MCF 10A (cell line): ENCODE measurements at regions of chr3 and their contacts with region 1.

Region 1: GRCh38 chr3:112013058-112013783 is 14.5 kb downstream of the TAGLN3 start:
- DNase-seq: peak; percentile 75
- H3K4me3 Mint-ChIP-seq: no peak overlapping the region
- H3K27ac Mint-ChIP-seq: no peak overlapping the region
- H3K4me1 Mint-ChIP-seq: no peaks in the 10 kb centered on the region
- H3K27me3 Mint-ChIP-seq: no peaks in the 10 kb centered on the region
- CTCF ChIP-seq: peak; percentile 42

Region 2: GRCh38 chr3:111668912-111669488 is 344.2 kb before region 1 on chr3:
- CTCF ChIA-PET with region 1: interaction called, 4 read pairs
- POLR2A ChIA-PET with region 1: interaction called, 3 read pairs
- intact Hi-C with region 1: loop called (anchors 1 kb)
- DNase-seq: peak; percentile 61
- H3K4me3 Mint-ChIP-seq: no peak overlapping the region
- H3K27ac Mint-ChIP-seq: peak overlapping the region; percentile 10
- H3K4me1 Mint-ChIP-seq: peaks cover 33% of the 10 kb centered on the region
- H3K27me3 Mint-ChIP-seq: no peaks in the 10 kb centered on the region
- CTCF ChIP-seq: peak; percentile 71

Region 3: GRCh38 chr3:111989061-111989678 is 24.1 kb before region 1 on chr3:
- CTCF ChIA-PET with region 1: interaction called, 101 read pairs
- POLR2A ChIA-PET with region 1: interaction called, 3 read pairs
- intact Hi-C with region 1: loop called (anchors 1 kb)
- DNase-seq: peak; percentile 74
- H3K4me3 Mint-ChIP-seq: no peak overlapping the region
- H3K27ac Mint-ChIP-seq: no peak overlapping the region
- H3K4me1 Mint-ChIP-seq: peaks cover 24% of the 10 kb centered on the region
- H3K27me3 Mint-ChIP-seq: no peaks in the 10 kb centered on the region
- CTCF ChIP-seq: peak; percentile 47

Region 4: DNA sequence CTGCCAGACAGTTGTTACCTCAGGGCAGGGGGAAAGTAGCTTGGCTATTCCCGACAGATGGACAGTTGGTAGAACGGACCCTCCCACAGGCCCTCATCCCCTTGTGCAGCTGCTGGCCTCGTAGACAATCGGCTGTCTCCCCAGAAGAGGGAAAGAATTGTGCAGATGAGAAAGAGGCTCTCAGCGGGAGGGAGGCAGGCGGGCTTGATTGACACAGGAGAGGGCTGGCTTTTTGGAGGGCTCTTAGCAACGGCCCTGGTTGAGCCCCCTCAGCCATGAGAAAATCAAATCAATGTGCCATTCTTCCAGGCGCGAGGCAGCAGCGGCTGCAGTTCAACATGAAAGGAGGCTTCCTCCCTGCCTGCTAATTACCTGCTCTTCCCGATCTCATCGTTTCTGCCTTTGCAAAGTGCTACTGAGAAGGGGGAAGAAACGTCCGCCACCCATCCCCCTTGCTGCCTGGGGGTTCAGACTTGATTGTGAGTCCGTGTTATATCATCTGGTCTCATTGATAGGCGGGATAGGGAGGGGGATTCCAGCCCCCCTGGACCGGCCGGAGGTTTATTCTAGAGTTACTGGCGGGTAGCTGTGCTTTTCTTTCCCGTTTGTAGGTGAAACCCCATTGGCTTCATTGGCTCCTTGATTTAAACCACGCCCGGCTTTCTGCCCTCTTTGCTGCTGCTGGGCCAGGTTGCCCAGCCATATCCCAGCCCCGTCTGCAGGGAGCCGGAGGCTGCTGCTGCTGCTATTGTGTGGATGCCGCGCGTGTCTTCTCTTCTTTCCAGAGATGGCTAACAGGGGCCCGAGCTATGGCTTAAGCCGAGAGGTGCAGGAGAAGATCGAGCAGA is 14.4 kb before region 1 on chr3 and contains the start of gene TAGLN3:
- CTCF ChIA-PET with region 1: interaction called, 31 read pairs
- POLR2A ChIA-PET with region 1: interaction called, 6 read pairs
- intact Hi-C with region 1: no loop called
- DNase-seq: peak; percentile 29
- H3K4me3 Mint-ChIP-seq: peak within 1 kb of the TSS; percentile 50
- H3K27ac Mint-ChIP-seq: no peak within 1 kb of the TSS
- H3K4me1 Mint-ChIP-seq: peaks cover 9% of the 10 kb centered on the region
- H3K27me3 Mint-ChIP-seq: no peaks in the 10 kb centered on the region
- CTCF ChIP-seq: no peak
- total RNA-seq, gene TAGLN3: not detected in 2 replicates

Region 5: DNA sequence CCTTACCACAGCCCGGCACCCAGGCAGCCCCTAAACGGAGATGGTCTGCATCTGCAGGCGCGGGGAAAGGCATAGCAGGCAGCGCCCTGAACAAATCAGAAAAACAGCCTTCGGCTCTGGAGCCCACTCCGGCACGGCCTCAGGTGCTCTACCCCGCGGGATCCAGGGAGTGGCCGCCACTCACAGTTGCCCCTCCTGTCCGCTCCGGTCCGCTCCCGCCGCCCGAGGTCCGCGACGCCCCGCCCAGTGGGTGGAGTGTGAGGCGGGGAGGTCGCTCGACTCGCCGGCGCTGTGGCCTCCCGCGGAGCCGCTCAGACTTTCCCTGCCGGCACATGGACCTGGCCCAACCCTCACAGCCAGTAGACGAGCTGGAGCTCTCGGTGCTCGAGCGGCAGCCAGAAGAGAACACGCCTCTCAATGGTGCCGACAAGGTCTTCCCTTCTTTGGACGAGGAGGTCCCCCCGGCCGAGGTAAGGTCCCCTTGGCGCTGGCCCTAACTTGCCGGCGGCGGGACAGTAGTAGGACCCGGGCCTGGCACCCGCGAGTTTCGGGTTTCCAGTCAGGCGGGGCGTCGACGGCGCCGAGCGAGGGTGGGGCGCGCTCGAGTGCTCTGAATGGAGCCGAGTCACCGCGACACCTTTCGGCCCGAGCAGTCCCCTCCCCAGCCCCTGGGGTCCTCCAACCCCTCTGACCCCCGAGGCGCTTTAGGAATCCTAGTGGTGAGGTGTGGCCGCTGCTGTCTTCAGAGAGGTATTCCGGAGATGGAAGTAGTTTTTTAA is 73.0 kb after region 1 on chr3 and contains the start of gene C3orf52:
- CTCF ChIA-PET with region 1: no interaction called
- POLR2A ChIA-PET with region 1: no interaction called
- intact Hi-C with region 1: loop called (anchors 2 kb)
- DNase-seq: peak; percentile 87
- H3K4me3 Mint-ChIP-seq: peak within 1 kb of the TSS; percentile 90
- H3K27ac Mint-ChIP-seq: peak within 1 kb of the TSS; percentile 96
- H3K4me1 Mint-ChIP-seq: peaks cover 25% of the 10 kb centered on the region
- H3K27me3 Mint-ChIP-seq: no peaks in the 10 kb centered on the region
- CTCF ChIP-seq: no peak
- total RNA-seq, gene C3orf52: 10.4 and 16.1 TPM in 2 replicates

Region 6: GRCh38 chr3:112123548-112123947 is 110.3 kb after region 1 on chr3:
- CTCF ChIA-PET with region 1: no interaction called
- POLR2A ChIA-PET with region 1: no interaction called
- intact Hi-C with region 1: no loop called
- DNase-seq: no peak
- H3K4me3 Mint-ChIP-seq: no peak overlapping the region
- H3K27ac Mint-ChIP-seq: no peak overlapping the region
- H3K4me1 Mint-ChIP-seq: peaks cover 7% of the 10 kb centered on the region
- H3K27me3 Mint-ChIP-seq: no peaks in the 10 kb centered on the region
- CTCF ChIP-seq: no peak

Region 7: DNA sequence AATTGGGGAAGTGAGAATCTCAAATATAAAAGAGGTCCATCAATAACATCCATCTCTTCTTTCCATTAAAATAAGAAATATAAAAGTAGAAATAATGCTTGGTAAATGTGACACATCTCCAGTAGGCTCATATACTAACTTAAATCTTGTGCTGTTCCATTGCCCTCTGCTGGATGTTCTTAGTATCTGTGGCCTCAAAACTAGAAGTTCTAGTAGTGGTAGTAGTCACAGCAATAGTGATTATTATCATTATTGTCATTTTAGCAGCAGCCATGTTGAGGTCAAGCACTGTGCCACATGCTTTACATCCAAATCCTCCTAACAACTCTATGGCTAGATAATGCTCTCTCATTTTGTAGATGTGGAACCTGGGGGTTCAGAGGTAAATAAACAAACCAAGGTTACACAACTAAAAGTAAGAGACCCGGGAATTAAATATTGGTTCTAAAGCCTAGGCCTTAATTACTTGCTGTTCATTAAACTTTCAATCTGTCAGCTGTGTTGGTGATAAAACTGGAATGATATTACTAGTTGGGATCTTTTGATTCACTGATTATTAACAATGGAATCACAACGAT is 506.3 kb after region 1 on chr3:
- CTCF ChIA-PET with region 1: no interaction called
- POLR2A ChIA-PET with region 1: no interaction called
- intact Hi-C with region 1: no loop called
- DNase-seq: peak; percentile 66
- H3K4me3 Mint-ChIP-seq: no peak overlapping the region
- H3K27ac Mint-ChIP-seq: no peak overlapping the region
- H3K4me1 Mint-ChIP-seq: no peaks in the 10 kb centered on the region
- H3K27me3 Mint-ChIP-seq: no peaks in the 10 kb centered on the region
- CTCF ChIP-seq: peak; percentile 69